ENCODE measurements at regions of chr20 and their contacts with region 1.

Region 1: DNA sequence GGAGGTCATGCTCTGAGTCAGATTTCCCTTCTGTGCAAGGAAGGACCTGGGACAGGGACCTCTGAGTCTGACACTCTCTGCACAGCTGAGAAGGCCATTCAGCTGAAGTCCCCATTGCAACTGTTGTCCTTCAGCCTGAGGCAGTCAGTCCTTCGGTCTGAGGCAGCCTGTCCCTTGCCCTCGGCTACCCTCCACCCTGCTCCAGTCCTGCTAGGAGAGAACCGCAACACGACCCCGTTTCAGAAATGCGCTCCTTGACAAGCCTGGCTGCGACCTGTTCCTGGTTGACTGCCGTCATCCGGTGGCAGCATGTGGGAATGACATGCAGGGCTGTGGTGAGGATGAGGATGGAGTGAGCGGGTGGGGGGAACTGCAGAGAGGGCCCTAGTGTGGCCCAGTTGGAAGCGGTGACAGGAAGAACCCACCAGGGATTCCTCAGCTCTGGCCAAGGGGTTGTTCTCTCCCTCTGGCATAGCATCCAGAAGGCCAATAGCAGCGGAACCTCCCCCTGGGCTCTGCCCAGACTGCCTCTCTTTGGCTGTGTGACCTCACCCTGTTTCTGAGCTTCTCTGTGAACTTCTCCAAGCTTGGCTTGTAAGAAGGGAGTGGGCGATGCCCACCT is 40.3 kb upstream of the ANGPT4 start:
- DNase-seq: peak; percentile 84
- ATAC-seq: peak; percentile 97
- H3K4me3 Mint-ChIP-seq: no peak overlapping the region
- H3K27ac Mint-ChIP-seq: no peak overlapping the region
- H3K4me1 Mint-ChIP-seq: no peaks in the 10 kb centered on the region
- H3K27me3 Mint-ChIP-seq: peaks cover 26% of the 10 kb centered on the region
- CTCF ChIP-seq: peak; percentile 98

Region 2: DNA sequence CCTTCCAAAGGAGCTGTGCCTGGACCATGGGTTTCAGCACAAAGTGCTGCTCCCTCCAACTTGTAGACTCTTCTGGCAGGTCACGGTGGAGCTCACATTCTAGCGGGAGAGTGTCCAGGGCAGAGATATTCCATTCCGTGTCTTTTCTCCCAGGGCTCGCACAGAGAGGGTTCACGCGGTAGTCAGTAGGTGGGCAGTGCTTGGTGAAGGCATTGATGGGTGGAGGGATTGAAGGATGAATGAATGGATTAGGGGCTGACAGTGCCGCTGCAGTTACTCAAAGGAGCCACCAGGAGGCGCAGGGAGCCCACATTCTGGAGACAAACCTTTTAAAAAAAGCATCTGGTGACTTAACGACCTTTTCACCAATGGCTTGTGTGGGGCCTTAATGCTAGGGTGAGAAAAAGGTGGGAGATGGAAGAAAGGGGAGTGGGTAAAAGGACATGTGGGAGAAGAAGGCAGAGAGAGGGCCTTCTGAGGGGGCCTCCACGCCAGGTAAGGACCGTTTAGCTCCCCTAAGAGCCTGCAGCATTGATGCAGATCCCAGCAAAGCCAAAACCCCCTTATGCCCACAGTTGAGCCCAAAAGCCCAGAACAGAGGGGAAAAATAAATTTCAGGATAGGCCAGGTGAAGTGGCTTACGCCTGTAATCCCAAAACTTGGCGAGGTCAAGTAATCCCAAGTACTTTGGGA is 140.4 kb before region 1 on chr20:
- CTCF ChIA-PET with region 1: interaction called, 266 read pairs
- POLR2A ChIA-PET with region 1: interaction called, 5 read pairs
- intact Hi-C with region 1: loop called (anchors 1 kb)
- DNase-seq: peak; percentile 79
- ATAC-seq: peak; percentile 75
- H3K4me3 Mint-ChIP-seq: no peak overlapping the region
- H3K27ac Mint-ChIP-seq: no peak overlapping the region
- H3K4me1 Mint-ChIP-seq: peaks cover 6% of the 10 kb centered on the region
- H3K27me3 Mint-ChIP-seq: peaks cover 11% of the 10 kb centered on the region
- CTCF ChIP-seq: peak; percentile 98

Region 3: DNA sequence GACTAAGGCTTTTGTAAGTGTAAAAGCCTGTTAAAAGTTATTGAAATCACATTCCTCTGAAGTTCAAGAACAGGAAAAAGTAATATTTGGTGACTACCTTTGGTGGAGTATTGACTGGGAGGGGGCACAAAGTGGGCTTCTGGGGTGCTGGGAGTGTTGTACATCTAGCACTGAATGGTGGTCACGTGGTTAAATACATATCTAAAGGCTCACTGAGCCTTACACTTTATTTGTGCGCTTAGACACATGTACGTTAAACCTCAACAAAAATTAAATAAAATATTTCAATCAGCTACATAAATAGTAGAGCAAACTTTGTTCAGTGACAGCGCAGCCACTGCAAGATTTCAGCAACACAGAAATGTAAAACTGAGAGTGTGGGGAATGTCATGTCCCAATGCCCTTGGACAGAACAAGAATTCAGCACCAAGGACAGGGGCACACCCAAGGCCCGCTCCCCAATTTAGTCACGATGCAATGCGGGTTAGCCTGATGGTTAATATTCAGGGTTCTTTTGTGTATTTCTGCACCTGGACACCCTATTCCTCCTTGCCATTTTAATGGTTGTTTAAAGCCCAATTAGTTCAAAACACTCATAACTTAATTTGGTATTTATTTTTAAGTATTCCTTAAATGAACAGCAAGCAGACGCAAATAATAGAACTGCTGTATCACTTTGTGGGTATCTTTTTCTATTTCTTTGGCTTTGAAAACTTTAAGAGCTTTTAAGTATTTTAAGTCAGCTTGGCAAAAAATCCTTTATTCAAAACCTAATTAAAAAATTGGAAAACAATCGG is 77.7 kb before region 1 on chr20:
- CTCF ChIA-PET with region 1: no interaction called
- POLR2A ChIA-PET with region 1: no interaction called
- intact Hi-C with region 1: no loop called
- DNase-seq: peak; percentile 29
- ATAC-seq: no peak
- H3K4me3 Mint-ChIP-seq: no peak overlapping the region
- H3K27ac Mint-ChIP-seq: no peak overlapping the region
- H3K4me1 Mint-ChIP-seq: peaks cover 12% of the 10 kb centered on the region
- H3K27me3 Mint-ChIP-seq: peaks cover 1% of the 10 kb centered on the region
- CTCF ChIP-seq: no peak

Region 4: GRCh38 chr20:910870-911770 is 45.3 kb before region 1 on chr20:
- CTCF ChIA-PET with region 1: interaction called, 15 read pairs
- POLR2A ChIA-PET with region 1: no interaction called
- intact Hi-C with region 1: no loop called
- DNase-seq: peak; percentile 12
- ATAC-seq: peak; percentile 56
- H3K4me3 Mint-ChIP-seq: no peak overlapping the region
- H3K27ac Mint-ChIP-seq: no peak overlapping the region
- H3K4me1 Mint-ChIP-seq: no peaks in the 10 kb centered on the region
- H3K27me3 Mint-ChIP-seq: no peaks in the 10 kb centered on the region
- CTCF ChIP-seq: no peak

Region 5: DNA sequence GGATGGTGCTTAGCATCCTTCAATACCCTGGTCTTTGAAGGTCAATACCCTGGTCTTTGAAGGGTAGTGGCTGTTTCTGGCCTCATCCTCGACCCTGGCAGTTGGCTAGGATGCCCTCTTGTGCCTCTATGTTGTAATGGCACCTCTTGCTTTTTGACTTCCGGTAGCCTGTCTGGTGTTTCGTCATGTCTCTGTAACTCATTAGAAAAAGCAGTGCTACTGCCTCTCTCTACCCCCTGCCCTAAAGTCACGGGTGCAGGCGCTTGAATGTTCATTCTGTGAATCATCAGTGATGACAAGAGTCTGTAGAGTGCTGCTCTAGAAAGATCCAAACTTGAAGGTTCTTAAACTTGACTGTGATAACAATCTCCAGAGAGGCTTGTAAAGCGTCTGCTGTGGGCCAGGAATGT is 17.3 kb after region 1 on chr20:
- CTCF ChIA-PET with region 1: interaction called, 57 read pairs
- POLR2A ChIA-PET with region 1: no interaction called
- intact Hi-C with region 1: no loop called
- DNase-seq: peak; percentile 61
- ATAC-seq: peak; percentile 96
- H3K4me3 Mint-ChIP-seq: no peak overlapping the region
- H3K27ac Mint-ChIP-seq: peak overlapping the region; percentile 33
- H3K4me1 Mint-ChIP-seq: peaks cover 2% of the 10 kb centered on the region
- H3K27me3 Mint-ChIP-seq: peaks cover 3% of the 10 kb centered on the region
- CTCF ChIP-seq: peak; percentile 58

Region 6: DNA sequence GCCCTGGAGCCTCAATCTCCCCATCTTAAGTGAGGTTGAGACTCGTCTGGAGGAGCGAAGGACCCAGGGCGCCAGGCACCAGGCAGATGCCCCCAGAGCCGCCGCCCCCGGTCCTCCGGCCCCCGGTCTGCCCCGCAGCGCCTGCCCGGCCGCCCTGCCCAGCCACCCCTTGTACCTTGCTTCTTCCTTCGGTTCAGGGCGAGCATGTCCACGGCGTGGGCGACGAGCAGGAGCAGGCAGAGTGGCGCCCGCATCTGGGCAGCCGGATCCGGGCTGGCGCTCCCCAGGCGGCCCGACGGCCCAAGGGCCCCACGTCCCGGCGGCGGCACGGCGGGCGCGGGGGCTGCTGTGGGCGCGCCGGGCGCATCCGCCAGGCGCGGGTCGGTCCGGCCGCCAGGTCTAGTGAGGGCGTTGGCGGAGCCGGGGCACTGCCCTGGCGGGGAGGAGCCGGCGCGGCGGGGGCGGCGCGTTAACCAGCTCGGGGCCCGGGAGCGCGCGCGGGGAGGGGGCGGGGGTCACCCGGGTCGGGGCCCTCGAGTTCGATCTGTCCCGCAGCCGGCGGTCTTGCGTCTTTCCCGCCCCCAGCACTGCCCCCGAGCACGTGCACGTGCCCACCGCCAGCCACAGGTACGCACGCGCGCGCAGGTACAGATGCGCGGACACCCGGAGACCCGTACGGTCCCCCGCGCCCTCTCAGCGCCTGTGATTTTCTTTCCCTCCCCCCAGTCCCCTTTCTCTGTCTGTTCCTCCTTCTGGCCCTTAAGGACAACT is 45.7 kb after region 1 on chr20 and contains the start of gene RSPO4:
- CTCF ChIA-PET with region 1: no interaction called
- POLR2A ChIA-PET with region 1: no interaction called
- intact Hi-C with region 1: no loop called
- DNase-seq: peak; percentile 21
- ATAC-seq: peak; percentile 64
- H3K4me3 Mint-ChIP-seq: peak within 1 kb of the TSS; percentile 59
- H3K27ac Mint-ChIP-seq: no peak within 1 kb of the TSS
- H3K4me1 Mint-ChIP-seq: peaks cover 7% of the 10 kb centered on the region
- H3K27me3 Mint-ChIP-seq: peaks cover 37% of the 10 kb centered on the region
- CTCF ChIP-seq: no peak
- total RNA-seq, gene RSPO4: not detected

Region 7: DNA sequence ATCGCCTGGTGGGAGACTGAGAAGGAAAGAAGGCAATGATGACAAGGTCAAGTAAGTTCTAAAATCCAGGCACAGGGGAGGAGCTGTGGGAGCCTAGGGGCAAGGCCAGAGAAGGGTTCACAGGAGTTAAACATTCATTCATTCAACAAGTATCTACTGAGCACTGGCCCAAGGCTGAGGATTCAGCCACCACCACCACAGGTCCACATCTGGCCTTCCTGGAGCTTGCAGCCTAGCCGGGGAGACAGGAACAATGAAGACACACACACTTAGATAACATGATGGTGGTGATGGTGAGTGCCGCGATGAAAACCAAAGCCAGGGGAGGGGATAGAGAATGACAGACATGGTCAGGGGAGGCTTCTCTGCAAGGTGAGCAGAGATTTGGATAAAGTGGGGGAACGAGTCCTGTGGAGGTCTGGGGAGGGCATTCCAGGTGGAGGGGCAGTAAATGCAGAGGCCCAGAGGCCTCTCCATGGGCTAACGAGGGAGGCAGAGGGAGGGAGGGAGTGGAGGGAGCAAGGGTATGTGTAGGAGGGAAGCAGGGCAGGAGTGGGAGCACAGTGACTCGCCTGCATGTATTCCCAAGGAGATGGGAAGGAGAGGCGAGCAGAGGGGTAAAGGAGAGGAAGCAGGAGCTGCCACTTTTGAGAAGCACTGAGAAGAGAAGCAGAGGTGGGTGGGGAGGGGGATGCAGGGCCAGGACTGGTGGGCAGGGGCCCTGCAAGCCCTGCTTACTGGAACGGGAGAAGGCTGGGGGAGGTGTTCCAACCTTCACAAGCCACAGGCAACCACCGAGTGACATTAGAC is 56.1 kb after region 1 on chr20:
- CTCF ChIA-PET with region 1: no interaction called
- POLR2A ChIA-PET with region 1: no interaction called
- intact Hi-C with region 1: no loop called
- DNase-seq: no peak
- ATAC-seq: no peak
- H3K4me3 Mint-ChIP-seq: no peak overlapping the region
- H3K27ac Mint-ChIP-seq: no peak overlapping the region
- H3K4me1 Mint-ChIP-seq: no peaks in the 10 kb centered on the region
- H3K27me3 Mint-ChIP-seq: peaks cover 2% of the 10 kb centered on the region
- CTCF ChIP-seq: no peak

Region 8: GRCh38 chr20:1212607-1213396 is 256.4 kb after region 1 on chr20:
- CTCF ChIA-PET with region 1: interaction called, 13 read pairs
- POLR2A ChIA-PET with region 1: no interaction called
- intact Hi-C with region 1: no loop called
- DNase-seq: peak; percentile 86
- ATAC-seq: peak; percentile 76
- H3K4me3 Mint-ChIP-seq: no peak overlapping the region
- H3K27ac Mint-ChIP-seq: no peak overlapping the region
- H3K4me1 Mint-ChIP-seq: peaks cover 33% of the 10 kb centered on the region
- H3K27me3 Mint-ChIP-seq: peaks cover 5% of the 10 kb centered on the region
- CTCF ChIP-seq: peak; percentile 91

Measured in activated CD8-positive, alpha-beta T cell treated with anti-CD3 and anti-CD28 coated beads for 36 hours (primary cell).